Ascending aorta (tissue), 2 donors: ENCODE measurements at regions of chr14 and their contacts with region 1.

Region 1: DNA sequence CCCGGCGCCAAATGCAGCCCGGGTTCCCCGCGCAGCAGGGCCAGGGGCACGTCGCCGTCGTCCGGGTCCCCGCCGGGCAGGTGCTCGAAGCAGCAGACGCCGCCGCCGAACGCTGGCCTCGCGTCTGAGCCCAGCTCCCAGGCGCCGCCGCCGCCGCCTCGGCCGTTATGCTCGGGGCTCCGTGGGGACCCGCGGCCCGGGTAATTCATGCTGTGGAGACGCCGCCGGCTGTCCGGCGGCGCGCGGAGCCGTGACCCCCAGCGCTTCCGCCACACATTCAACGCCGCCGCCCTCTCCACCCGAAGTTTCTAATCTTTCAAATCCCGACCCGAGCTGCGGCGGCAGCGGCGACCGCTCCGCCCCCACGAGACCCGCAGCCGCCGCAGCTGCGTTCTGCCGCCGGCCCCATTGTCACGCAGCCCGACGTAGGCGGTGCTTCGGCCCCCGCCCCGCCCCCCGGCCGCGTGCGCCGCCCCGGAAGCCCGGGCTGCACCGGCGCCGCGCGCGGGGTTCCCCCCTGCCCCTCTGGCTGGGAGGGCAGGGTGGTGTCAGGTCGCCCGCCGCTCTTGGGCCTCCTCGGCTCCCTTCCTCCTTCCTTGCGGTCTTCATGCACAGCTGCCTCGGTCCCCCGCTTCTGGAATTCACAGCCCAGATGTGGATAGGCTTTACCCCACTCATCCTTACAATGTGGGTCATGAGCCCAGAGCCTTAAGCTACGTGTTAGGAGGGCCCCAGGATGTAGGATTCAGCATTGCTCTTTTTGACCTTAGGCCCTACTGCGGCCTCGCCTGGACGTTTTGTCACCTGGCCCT is at the start of gene DDHD1:
- DNase-seq: peak; percentile 27 to 87
- H3K4me3 ChIP-seq: peak within 1 kb of the TSS; percentile 71 to 96
- H3K27ac ChIP-seq: peak within 1 kb of the TSS; percentile 87 to 96
- H3K4me1 ChIP-seq: peaks cover 0 to 11% of the 10 kb centered on the region in 2 donors
- H3K27me3 ChIP-seq: no peaks in the 10 kb centered on the region
- CTCF ChIP-seq: no peak
- total RNA-seq, gene DDHD1: 21.3 TPM

Region 2: GRCh38 chr14:52706724-52707706 is 446.1 kb before region 1 on chr14 and contains the start of gene PSMC6:
- intact Hi-C with region 1: loop called (anchors 10 kb)
- DNase-seq: peak; percentile 80 to 96
- H3K4me3 ChIP-seq: peak within 1 kb of the TSS; percentile 78 to 96
- H3K27ac ChIP-seq: peak within 1 kb of the TSS; percentile 89
- H3K4me1 ChIP-seq: peaks cover 7 to 15% of the 10 kb centered on the region in 2 donors
- H3K27me3 ChIP-seq: no peaks in the 10 kb centered on the region
- CTCF ChIP-seq: no peak
- total RNA-seq, gene PSMC6: 19.3 TPM

Region 3: DNA sequence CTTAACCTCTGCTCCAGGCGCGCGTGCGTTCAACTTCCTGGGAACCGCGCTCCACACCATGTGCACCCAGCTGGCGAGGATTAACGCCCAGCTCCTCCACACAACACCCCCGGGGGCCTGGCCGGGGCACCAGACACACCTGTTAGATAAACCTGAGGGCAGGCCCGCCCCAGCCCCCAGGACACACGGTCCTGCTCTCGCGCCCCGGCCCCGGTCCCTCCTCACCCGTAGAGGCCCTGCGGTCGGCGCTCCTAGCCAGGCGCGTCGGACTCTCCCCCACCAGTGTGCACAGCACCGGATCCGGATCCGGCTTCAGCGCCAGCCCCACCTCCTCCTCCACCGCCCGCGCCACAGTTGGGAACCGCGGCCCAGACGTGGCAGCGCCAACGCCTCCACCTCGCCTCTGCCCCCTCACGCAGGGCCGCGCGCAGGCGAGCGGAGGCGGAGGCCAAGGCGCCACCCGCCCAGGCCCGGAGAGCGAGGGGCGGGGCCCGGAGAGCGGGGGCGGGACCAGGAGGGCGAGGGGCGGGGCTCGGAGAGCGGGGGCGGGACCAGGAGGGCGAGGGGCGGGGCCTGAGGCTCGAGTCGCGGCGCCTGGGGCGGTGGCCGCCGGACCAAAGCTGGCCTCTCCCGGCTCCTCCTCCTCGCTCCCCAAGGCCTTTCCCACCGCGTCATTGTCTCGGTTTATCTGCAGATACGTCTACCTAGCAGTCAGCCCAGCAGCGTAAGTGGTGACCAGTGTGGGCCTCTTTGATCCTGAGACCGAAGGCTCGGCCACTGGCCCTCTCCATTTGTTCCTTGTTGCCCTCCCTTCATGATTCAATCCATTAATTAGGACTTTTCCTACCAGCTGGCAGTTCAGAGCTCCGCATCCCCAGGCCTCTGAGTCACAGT is 361.6 kb before region 1 on chr14 and contains the start of gene GNPNAT1:
- intact Hi-C with region 1: loop called (anchors 5 kb)
- DNase-seq: peak; percentile 42 to 92
- H3K4me3 ChIP-seq: peak within 1 kb of the TSS; percentile 83 to 91
- H3K27ac ChIP-seq: peak within 1 kb of the TSS; percentile 94 to 95
- H3K4me1 ChIP-seq: peaks cover 6 to 21% of the 10 kb centered on the region in 2 donors
- H3K27me3 ChIP-seq: no peaks in the 10 kb centered on the region
- CTCF ChIP-seq: no peak
- total RNA-seq, gene GNPNAT1: 39.9 TPM

Region 4: DNA sequence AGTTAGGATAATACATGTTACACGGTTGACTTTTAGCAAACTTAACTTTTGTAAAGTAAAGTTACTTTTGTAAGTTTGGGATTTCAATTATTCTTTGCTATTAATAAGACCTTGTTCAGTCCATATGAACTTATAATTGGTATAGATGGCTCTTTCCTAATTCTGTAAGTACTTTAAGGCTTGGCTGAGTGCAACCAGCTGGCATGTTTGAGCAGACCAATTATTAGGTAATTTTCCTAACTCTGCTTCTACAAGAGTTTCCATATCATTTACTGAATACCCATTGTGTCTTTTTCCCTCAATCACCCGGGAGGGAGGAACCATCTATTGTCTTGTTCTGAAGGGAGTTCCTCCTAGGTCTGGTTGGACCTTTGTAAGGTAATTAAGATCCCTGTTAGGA is 26.4 kb after region 1 on chr14:
- intact Hi-C with region 1: loop called (anchors 1 kb)
- DNase-seq: no peak
- H3K4me3 ChIP-seq: no peak overlapping the region
- H3K27ac ChIP-seq: no peak overlapping the region
- H3K4me1 ChIP-seq: no peaks in the 10 kb centered on the region
- H3K27me3 ChIP-seq: no peaks in the 10 kb centered on the region
- CTCF ChIP-seq: no peak